Ascending aorta (tissue), 2 donors: ENCODE measurements at regions of chr14 and their contacts with region 1.

Region 1: GRCh38 chr14:76584271-76584702 is 177.0 kb upstream of the VASH1 start:
- DNase-seq: no peak
- H3K4me3 ChIP-seq: no peak overlapping the region
- H3K27ac ChIP-seq: no peak overlapping the region
- H3K4me1 ChIP-seq: no peaks in the 10 kb centered on the region
- H3K27me3 ChIP-seq: no peaks in the 10 kb centered on the region
- CTCF ChIP-seq: no peak

Region 2: GRCh38 chr14:76305268-76305826 is 278.9 kb before region 1 on chr14:
- intact Hi-C with region 1: no loop called
- DNase-seq: no peak
- H3K4me3 ChIP-seq: no peak overlapping the region
- H3K27ac ChIP-seq: no peak overlapping the region
- H3K4me1 ChIP-seq: peaks cover 0 to 2% of the 10 kb centered on the region in 2 donors
- H3K27me3 ChIP-seq: no peaks in the 10 kb centered on the region
- CTCF ChIP-seq: no peak

Region 3: DNA sequence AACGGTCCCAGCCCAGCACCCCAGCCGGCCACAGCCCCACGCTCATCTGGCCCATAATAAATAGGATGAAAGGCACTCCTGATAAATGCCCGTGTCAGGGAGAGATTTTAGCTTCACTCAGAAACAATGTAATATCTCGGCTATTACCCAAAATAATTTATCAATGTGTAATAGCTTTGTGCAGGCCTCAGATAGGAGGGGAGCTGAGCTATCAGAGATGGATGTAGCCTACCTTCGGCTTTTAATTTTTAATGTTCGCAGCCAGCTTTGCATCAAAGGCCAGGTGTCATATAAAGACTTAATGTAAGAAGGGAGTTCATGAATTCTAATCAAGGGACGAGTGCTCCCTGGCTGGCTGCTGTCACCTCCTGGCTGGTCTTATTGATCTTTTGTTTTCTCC is 36.5 kb before region 1 on chr14:
- intact Hi-C with region 1: loop called (anchors 2 kb)
- DNase-seq: no peak
- H3K4me3 ChIP-seq: no peak overlapping the region
- H3K27ac ChIP-seq: no peak overlapping the region
- H3K4me1 ChIP-seq: no peaks in the 10 kb centered on the region
- H3K27me3 ChIP-seq: no peaks in the 10 kb centered on the region
- CTCF ChIP-seq: no peak

Region 4: GRCh38 chr14:76654573-76655090 is 70.3 kb after region 1 on chr14:
- intact Hi-C with region 1: no loop called
- DNase-seq: no peak
- H3K4me3 ChIP-seq: no peak overlapping the region
- H3K27ac ChIP-seq: no peak overlapping the region
- H3K4me1 ChIP-seq: no peaks in the 10 kb centered on the region
- H3K27me3 ChIP-seq: no peaks in the 10 kb centered on the region
- CTCF ChIP-seq: no peak

Region 5: GRCh38 chr14:76672123-76672522 is 87.8 kb after region 1 on chr14:
- intact Hi-C with region 1: no loop called
- DNase-seq: no peak
- H3K4me3 ChIP-seq: no peak overlapping the region
- H3K27ac ChIP-seq: no peak overlapping the region
- H3K4me1 ChIP-seq: no peaks in the 10 kb centered on the region
- H3K27me3 ChIP-seq: no peaks in the 10 kb centered on the region
- CTCF ChIP-seq: no peak

Region 6: DNA sequence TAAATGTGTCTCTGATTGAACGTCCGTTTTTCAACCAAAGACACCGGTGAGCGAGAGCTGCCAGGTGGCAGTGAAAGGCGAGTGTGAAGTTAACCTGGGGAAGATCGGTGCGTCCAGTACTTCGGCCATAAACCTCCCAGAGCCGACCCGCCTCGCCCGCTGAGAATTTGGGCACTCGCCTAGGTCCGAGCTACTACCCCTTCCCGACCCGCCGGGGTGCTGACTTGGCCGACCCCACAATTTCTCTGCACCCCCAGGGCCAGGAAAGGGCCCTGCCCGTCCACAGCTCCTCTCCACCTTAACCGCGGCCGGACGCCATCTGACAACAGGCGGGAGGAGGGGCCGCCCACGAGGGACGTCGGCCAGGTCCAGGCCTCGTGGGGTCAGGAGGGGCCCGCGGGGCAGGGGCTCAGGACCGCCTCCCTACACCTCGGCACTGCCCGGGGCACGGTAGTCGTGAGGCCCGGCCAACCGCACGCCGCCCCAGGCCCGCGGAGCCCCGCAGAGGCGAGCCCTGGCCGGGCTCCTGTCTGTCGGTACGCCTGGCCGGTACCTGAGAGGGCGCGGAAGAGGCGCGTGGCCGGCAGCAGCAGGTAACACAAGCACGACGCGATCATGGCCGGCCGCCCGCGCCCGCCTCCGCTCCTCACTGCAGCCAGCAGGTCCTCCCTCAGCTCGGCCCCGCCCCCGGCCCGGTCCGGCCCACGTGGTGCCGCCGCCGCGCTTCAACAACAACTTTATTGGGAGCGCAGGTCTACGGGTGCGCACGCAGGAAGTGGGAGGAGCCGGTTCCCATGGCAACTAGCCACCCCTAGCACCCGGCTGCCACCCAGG is 228.1 kb after region 1 on chr14 and contains the start of gene ANGEL1:
- intact Hi-C with region 1: no loop called
- DNase-seq: peak; percentile 86 to 98
- H3K4me3 ChIP-seq: peak within 1 kb of the TSS; percentile 76 to 88
- H3K27ac ChIP-seq: peak within 1 kb of the TSS; percentile 74 to 79
- H3K4me1 ChIP-seq: peaks cover 0 to 6% of the 10 kb centered on the region in 2 donors
- H3K27me3 ChIP-seq: no peaks in the 10 kb centered on the region
- CTCF ChIP-seq: no peak
- total RNA-seq, gene ANGEL1: 15.5 TPM